Ascending aorta (tissue), 2 donors: ENCODE measurements at regions of chr16 and their contacts with region 1.

Region 1: DNA sequence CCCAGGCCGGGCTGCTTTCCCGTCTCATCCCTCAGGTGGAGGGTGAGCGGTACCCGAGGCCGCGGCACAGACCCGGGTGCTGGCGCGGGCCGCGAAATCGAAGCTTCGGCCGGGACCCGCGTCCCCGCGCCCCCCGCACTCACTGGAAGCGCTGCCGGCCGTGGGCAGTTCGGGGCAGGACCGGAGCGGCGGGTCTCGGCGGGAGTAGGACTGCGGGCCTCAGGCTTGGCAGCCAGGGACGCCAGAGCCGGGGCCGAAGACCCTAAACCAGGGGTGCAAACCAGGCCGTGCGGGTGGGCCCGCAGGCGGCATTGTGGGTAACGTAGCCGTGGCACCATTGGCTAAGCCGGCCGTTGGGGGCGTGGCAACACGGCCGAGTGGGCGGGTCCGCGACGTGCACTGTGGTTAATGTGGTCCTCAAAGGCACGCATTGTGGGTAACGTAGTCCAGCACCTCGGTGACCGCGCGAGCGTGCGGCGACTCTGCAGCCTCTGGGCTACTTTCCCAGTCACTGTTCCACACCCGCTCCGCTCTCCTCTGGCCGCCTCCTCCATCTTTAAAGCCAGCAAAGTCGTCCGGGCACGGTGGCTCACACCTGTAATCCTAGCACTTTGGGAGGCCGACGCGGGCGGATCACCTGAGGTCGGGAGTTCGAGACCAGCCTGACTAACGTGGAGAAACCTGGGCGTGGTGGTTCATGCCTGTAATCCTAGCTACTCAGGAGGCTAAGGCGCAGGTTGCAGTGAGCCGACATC is at the start of gene ZNF500:
- DNase-seq: peak; percentile 94 to 99
- H3K4me3 ChIP-seq: peak within 1 kb of the TSS; percentile 78 to 99
- H3K27ac ChIP-seq: peak within 1 kb of the TSS; percentile 77 to 83
- H3K4me1 ChIP-seq: peaks cover 8 to 23% of the 10 kb centered on the region in 2 donors
- H3K27me3 ChIP-seq: no peaks in the 10 kb centered on the region
- CTCF ChIP-seq: no peak
- total RNA-seq, gene ZNF500: 13.7 TPM

Region 2: DNA sequence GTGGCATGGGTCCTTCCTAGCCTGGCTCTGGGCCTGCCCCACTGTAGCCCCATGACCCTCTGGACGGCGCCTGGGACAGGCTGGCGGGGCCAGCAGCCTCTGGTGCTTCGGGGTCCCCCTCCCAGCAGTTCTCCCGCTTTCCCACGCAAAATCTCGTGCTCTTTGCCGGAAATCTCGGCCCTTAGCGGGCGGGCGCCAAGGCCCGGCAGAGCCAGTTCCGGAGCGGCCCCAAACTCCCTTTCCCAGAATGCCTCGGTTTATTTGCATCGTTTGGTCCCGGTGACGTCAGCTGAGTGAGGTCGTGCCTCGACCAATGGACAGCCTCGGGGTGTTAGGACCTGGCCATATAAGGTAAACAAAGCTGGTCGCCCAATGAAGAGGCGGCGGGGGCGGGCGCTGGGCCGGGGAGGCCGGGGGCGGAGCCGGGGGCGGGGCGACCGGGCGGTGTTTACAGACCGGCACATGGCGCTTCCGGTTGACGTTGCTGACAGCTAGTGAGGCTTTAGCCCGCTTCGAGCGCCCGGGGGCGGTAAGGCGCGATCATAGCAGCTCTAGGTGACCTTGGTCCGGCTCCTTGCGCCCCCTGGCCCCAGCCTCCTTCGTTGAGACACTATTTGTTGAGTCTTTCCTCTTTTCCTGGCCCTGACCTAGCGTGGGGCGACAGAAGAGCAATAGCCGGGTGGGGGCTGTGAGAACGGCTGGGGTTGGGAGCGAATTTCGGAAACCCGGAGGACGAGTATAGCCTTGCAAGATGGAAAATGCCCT is 150.8 kb before region 1 on chr16:
- intact Hi-C with region 1: loop called (anchors 2 kb)
- DNase-seq: peak; percentile 100
- H3K4me3 ChIP-seq: peak overlapping the region; percentile 92 to 98
- H3K27ac ChIP-seq: peak overlapping the region; percentile 91 to 98
- H3K4me1 ChIP-seq: peaks cover 23 to 41% of the 10 kb centered on the region in 2 donors
- H3K27me3 ChIP-seq: no peaks in the 10 kb centered on the region
- CTCF ChIP-seq: peak; percentile 41 to 56 (median 52)

Region 3: GRCh38 chr16:4693296-4693955 is 73.6 kb before region 1 on chr16 and contains the start of gene NUDT16L1:
- intact Hi-C with region 1: loop called (anchors 2 kb)
- DNase-seq: peak; percentile 86 to 98
- H3K4me3 ChIP-seq: peak within 1 kb of the TSS; percentile 85 to 93
- H3K27ac ChIP-seq: peak within 1 kb of the TSS; percentile 78 to 83
- H3K4me1 ChIP-seq: peaks cover 15 to 32% of the 10 kb centered on the region in 2 donors
- H3K27me3 ChIP-seq: no peaks in the 10 kb centered on the region
- CTCF ChIP-seq: peak; percentile 19 to 23 (median 23)
- total RNA-seq, gene NUDT16L1: 77.3 TPM

Region 4: DNA sequence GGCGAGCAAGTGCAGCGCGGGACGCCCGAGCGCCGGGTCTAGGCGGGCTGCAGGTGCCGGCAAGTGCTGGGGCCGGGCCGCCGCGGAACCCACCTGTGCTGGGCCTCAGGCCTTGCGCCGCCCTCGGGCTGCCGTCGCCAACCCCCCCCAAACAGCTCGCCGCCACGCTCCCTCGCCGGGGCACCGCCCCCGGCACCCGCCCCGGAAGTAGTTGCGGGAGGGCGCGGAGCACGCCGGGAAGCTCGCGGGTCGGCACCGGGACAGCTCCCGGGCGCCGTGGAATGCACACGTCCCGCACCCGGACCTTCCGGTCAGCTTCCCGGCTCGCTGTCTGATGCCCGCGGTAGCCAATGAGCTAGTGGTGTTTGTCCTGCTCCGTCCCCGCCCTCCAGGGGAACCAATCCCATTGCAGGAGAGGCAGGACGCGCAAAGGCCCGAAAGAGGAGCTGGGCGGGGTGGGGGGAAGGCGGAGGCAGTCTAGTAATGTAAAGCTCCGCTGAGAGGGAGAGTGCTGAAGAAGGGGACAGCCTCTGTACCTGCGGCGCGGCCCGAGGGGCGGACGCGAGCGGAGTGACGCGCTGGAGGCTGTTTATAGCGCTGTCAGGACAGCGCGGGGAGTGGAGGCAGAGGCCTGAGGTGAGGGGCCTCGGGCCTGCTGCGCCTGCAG is 32.9 kb before region 1 on chr16 and contains the starts of genes ANKS3 and DNAAF8:
- intact Hi-C with region 1: loop called (anchors 1 kb)
- DNase-seq: peak; percentile 91 to 99
- H3K4me3 ChIP-seq: peak within 1 kb of the TSS; percentile 78 to 92
- H3K27ac ChIP-seq: peak within 1 kb of the TSS; percentile 78 to 79
- H3K4me1 ChIP-seq: peaks cover 0 to 8% of the 10 kb centered on the region in 2 donors
- H3K27me3 ChIP-seq: no peaks in the 10 kb centered on the region
- CTCF ChIP-seq: no peak
- total RNA-seq, gene ANKS3: 55.9 TPM
- total RNA-seq, gene DNAAF8: not detected

Region 5: DNA sequence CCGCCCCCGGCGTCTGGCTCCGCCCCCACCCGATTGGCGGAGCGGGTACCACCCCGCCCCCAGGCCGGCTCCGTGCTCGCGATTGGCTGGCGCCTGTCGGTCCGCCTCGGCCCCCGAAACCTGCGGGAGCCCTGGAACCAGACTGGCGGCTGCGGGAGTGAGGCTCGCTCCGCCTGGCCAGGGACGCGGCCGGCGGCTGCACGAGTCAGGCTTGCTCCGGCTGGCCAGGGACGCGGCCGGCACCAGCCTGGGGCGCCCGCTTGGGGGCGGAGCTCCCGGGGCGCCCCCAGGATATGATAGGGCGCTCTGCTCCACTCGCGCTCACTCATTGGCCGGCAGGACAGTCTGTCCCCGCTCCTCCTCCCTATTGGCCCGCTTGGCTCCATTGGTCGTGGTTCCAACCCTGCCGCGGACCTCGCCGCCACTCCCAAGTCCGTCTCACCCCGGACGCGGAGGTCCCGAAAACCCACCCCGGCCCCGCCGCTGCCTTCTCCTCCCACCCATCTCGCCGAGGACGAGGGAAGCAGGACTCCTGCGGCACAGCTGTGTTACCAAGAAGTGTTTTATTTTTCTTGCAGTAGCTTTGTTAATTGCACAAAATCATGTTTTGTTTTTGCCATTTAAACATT is 35.7 kb after region 1 on chr16:
- intact Hi-C with region 1: loop called (anchors 1 kb)
- DNase-seq: peak; percentile 73 to 95
- H3K4me3 ChIP-seq: peak overlapping the region; percentile 74 to 78
- H3K27ac ChIP-seq: peak overlapping the region; percentile 67 to 69
- H3K4me1 ChIP-seq: peaks cover 4 to 9% of the 10 kb centered on the region in 2 donors
- H3K27me3 ChIP-seq: no peaks in the 10 kb centered on the region
- CTCF ChIP-seq: peak in 1 of 3 experiments; percentile 1

Region 6: DNA sequence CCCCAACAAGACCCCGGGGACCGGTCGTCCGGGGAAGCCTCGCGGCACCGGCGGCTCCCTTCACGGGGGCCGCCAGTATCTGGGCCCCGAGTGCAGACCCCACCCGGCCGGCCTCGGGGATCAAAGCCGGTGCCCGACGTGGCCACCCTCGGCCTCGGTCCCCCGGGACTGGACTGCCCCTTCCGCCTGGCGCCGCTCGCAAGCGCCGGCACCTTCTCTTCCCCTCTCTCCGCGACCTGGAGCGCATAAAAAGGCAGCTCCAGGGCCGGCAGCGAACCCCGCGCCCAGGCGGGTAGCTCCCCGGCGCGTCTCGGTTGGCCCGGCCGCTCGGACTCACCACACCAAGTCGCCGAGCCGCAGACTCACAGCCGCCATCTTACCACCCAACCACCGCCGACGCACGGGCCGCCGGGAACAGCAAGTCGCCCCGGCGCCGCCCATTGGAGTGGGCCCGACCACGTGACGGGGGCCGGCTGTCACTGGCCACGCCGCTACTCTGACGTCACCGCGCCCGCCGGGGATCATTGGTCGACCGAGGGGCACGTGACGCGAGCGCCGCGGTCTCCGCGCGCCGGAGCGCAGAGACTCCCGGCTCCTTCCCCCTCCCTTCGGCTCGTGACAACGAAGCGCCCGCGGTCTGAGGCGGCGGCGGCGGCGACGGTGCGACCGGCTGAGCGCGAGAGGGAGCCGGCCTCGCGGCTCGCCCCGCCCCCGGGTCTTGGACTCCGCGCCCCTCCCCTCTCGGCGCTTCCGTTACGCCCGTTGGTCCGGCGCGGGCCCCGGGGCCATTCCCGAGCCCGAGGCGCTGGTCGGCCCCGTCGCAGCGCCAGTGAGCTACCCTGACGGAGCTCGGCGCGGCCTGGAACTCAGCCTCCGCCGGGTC is 80.1 kb after region 1 on chr16 and contains the starts of genes GLYR1 and UBN1:
- intact Hi-C with region 1: loop called (anchors 1 kb)
- DNase-seq: peak; percentile 97 to 100
- H3K4me3 ChIP-seq: peak within 1 kb of the TSS; percentile 74 to 98
- H3K27ac ChIP-seq: peak within 1 kb of the TSS; percentile 92 to 97
- H3K4me1 ChIP-seq: peaks cover 12 to 23% of the 10 kb centered on the region in 2 donors
- H3K27me3 ChIP-seq: no peaks in the 10 kb centered on the region
- CTCF ChIP-seq: no peak
- total RNA-seq, gene GLYR1: 39.2 TPM
- total RNA-seq, gene UBN1: 31.8 TPM